Activated naive CD4-positive, alpha-beta T cell treated with anti-CD3 and anti-CD28 coated beads for 36 hours (primary cell): ENCODE measurements at regions of chrX and their contacts with region 1.

Region 1: DNA sequence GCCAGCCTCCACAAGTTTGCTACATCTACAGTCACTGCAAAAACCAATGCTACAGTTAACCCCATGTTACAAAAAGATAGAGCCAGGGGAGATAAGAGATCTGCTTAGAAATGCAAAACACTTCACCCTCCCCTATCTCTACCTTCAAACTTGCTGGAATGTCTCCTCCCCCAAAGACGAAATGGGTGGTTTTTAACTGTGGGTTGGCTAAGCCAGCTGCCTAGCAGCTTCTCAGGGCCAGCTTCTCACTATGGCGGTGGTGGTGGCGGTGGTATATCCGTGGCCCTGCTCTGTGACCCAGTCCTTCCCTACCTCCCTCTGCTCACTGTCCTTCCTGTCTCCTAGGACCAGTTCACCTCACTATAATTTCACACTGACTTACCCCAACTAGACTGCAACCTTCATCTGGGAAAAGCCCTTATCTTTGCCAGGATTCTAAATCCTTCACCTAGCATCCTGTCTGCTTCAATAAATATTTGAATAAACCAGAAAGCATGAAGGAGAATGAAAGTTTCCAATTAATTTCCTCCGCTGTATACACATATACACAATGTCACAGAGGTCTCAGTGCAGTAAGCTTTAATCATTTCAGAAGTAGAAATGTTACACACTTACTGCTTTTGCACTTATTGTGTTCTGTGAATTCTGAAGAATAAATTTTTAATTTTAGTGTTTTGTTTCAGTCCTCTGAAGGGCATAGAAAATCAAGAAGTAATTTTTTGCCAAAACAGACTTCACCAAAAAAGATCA is 46.3 kb downstream of the SH3KBP1 start:
- DNase-seq: peak; percentile 50
- H3K4me3 Mint-ChIP-seq: peak overlapping the region; percentile 66
- H3K27ac Mint-ChIP-seq: peak overlapping the region; percentile 92
- H3K4me1 Mint-ChIP-seq: peaks cover 72% of the 10 kb centered on the region
- H3K27me3 Mint-ChIP-seq: no peaks in the 10 kb centered on the region

Region 2: DNA sequence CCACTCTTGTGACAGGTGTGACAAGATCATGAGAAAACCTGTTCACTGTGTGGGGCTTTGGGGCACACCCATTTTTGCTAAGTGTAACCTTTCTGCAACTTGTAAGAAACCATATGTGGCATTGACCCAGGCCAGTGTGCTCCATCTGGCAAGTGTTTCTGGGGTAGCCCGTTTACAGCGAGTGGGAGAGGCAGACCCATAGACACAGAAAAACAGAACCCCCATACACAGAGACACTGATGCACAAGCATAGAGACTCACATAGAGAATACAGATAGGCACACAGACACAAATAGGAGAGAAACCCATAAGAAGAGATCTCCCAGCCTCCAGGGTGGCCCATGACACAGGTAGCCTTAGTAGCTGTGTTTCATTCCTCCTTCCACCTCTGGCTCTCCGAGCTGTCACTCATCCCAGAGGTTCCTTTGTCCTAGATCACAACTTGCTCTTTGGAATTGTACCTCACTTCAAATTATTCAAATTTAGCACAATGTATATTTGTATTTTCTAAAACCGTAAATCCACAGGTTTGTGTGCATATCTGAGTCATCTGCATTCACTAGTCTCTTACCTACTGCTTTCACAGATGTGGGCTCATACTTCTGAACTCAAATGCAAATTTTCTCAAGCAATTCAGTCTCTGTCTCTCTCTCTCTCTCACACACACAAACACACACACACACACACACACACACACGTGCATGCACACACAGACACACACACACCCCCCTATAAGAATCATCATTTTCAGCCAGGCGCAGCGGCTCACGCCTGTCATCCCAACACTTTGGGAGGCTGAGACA is 68.0 kb before region 1 on chrX:
- CTCF ChIA-PET with region 1: no interaction called
- intact Hi-C with region 1: loop called (anchors 2 kb)
- DNase-seq: no peak
- H3K4me3 Mint-ChIP-seq: peak overlapping the region; percentile 56
- H3K27ac Mint-ChIP-seq: peak overlapping the region; percentile 92
- H3K4me1 Mint-ChIP-seq: peaks cover 77% of the 10 kb centered on the region
- H3K27me3 Mint-ChIP-seq: no peaks in the 10 kb centered on the region

Region 3: GRCh38 chrX:19799319-19800182 is 41.5 kb before region 1 on chrX:
- CTCF ChIA-PET with region 1: interaction called, 6 read pairs
- intact Hi-C with region 1: loop called (anchors 1 kb)
- DNase-seq: peak; percentile 68
- H3K4me3 Mint-ChIP-seq: peak overlapping the region; percentile 88
- H3K27ac Mint-ChIP-seq: peak overlapping the region; percentile 99
- H3K4me1 Mint-ChIP-seq: peaks cover 65% of the 10 kb centered on the region
- H3K27me3 Mint-ChIP-seq: no peaks in the 10 kb centered on the region

Region 4: GRCh38 chrX:19824603-19825002 is 16.5 kb before region 1 on chrX:
- CTCF ChIA-PET with region 1: no interaction called
- intact Hi-C with region 1: loop called (anchors 2 kb)
- DNase-seq: peak; percentile 57
- H3K4me3 Mint-ChIP-seq: no peak overlapping the region
- H3K27ac Mint-ChIP-seq: no peak overlapping the region
- H3K4me1 Mint-ChIP-seq: peaks cover 34% of the 10 kb centered on the region
- H3K27me3 Mint-ChIP-seq: no peaks in the 10 kb centered on the region

Region 5: DNA sequence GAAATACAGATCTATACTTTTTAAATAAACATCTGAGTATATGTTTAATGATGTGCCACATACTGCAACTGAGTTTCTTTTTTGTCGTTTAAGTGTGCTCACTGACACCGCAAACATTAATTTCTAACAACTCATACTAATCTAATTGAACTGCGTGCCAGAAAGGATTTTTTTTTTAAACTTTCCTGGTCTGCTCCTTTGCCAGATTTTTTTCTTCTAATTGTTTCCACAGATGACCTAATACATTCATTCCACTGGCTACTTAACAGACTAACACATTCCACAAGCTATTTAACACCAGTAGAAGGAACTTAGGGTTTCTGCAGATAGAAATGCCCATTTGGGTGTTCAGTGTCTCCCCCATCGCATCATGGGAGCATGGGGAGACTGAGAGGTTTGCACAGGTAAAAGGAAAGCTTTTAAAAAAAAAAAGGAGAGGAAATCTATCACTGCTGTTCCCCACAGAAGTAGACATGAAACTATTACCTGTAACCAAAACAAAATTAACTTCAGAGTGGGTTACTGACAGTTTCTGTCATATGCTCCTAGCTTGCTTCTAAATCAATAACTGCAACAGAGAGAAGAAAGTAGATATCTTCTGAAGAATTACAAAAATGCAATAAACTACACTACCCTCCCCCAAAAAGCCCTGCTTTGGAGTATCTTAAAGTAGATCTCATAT is 14.8 kb after region 1 on chrX:
- CTCF ChIA-PET with region 1: interaction called, 8 read pairs
- intact Hi-C with region 1: loop called (anchors 1 kb)
- DNase-seq: no peak
- H3K4me3 Mint-ChIP-seq: peak overlapping the region; percentile 70
- H3K27ac Mint-ChIP-seq: peak overlapping the region; percentile 92
- H3K4me1 Mint-ChIP-seq: peaks cover 30% of the 10 kb centered on the region
- H3K27me3 Mint-ChIP-seq: no peaks in the 10 kb centered on the region